GM12878 (cell line): ENCODE measurements at regions of chr15 and their contacts with region 1.

Region 1: DNA sequence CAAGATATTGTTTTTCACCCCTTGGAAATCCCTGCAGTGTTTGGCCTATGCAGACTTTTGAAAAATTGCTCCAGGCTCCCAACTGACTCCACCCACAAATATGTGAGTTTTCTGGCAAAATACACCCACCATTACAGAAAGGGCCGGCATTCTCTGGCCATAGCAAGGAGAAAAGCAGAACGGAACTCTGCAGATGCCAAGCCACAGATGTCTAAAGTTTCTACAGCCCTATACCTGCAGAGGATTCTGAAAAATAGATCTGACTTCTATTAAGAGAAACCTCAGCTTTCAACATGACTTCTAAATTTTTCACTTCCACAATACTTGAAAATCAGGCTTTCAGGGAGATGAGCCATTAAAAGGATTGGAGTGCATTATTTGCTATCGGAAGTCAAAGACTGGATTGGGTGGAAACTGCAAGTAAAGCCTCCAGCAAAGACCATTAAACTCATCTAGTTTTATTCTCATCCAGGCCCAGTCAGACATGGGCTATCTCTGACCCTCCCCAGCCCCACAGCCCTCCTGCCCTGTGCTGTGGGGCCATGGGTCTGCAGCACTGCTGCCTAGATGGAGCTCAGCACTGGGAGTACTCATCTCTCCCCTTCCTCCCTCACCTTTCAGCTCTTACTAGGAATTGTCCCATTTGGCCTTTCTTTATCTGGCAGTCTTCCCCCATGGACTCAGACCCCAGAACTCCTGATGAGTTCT is 243.1 kb upstream of the GOLGA6L4 start:
- DNase-seq: peak; percentile 60
- ATAC-seq: peak; percentile 89
- H3K4me3 ChIP-seq: no peak overlapping the region; the same call in 1 of the 2 replicates
- H3K27ac ChIP-seq: peak overlapping the region; percentile 77
- H3K4me1 ChIP-seq: peaks cover 31% of the 10 kb centered on the region
- H3K27me3 ChIP-seq: no peaks in the 10 kb centered on the region
- CTCF ChIP-seq: no peak
- EP300 ChIP-seq: no peak
- POLR2A ChIP-seq: no peak
- RAD21 ChIP-seq: 0 out of 2 replicates have a peak, but pooled peaks have one; percentile 16

Region 2: GRCh38 chr15:83564975-83565532 is 427.4 kb before region 1 on chr15:
- CTCF ChIA-PET with region 1: interaction called, 8 read pairs
- POLR2A ChIA-PET with region 1: no interaction called
- RAD21 ChIA-PET with region 1: interaction called, 10 read pairs
- SMC1A ChIA-PET with region 1: interaction called, 10 read pairs
- in situ Hi-C with region 1: no loop called
- intact Hi-C with region 1: no loop called
- DNase-seq: no peak
- ATAC-seq: no peak
- H3K4me3 ChIP-seq: no peak overlapping the region
- H3K27ac ChIP-seq: no peak overlapping the region
- H3K4me1 ChIP-seq: no peaks in the 10 kb centered on the region; the same call in 1 of the 2 replicates
- H3K27me3 ChIP-seq: no peaks in the 10 kb centered on the region
- CTCF ChIP-seq: no peak
- EP300 ChIP-seq: no peak
- POLR2A ChIP-seq: no peak
- RAD21 ChIP-seq: no peak

Region 3: GRCh38 chr15:83734487-83734886 is 258.0 kb before region 1 on chr15:
- CTCF ChIA-PET with region 1: interaction called, 23 read pairs
- POLR2A ChIA-PET with region 1: interaction called, 3 read pairs
- RAD21 ChIA-PET with region 1: interaction called, 10 read pairs
- SMC1A ChIA-PET with region 1: interaction called, 3 read pairs
- in situ Hi-C with region 1: no loop called
- intact Hi-C with region 1: loop called (anchors 10 kb)
- DNase-seq: no peak
- ATAC-seq: peak; percentile 56; the same call in 2 of the 3 replicates
- H3K4me3 ChIP-seq: no peak overlapping the region
- H3K27ac ChIP-seq: no peak overlapping the region
- H3K4me1 ChIP-seq: no peaks in the 10 kb centered on the region
- H3K27me3 ChIP-seq: no peaks in the 10 kb centered on the region
- CTCF ChIP-seq: peak; percentile 34 to 53 (median 49); a peak in 5 of 6 replicates
- EP300 ChIP-seq: no peak
- POLR2A ChIP-seq: no peak
- RAD21 ChIP-seq: peak; percentile 94

Region 4: DNA sequence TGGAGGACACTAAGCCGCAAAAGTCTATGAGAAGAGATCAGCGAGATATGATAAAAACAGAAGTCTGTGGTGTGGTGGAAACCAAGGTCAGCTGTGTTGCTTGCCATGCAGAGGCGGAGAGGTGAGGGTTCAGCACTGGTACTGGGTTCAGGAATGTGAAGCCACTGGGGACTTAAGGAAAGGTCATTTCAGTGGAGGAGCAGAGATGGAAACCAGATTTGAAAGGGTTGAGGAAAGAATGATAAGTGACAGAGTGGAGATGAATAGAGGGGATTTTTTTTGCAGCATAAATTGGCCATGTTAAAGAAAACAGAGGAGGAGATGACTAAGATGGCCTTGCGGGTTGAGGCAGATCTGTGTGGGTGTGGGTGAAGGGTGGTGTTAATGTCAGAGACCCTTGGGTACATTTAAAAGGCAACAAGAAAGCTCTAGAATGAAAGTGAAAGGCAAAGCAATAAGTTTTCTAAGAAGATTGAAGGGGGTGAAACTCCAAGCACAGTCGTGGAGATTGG is 73.1 kb before region 1 on chr15:
- CTCF ChIA-PET with region 1: no interaction called
- POLR2A ChIA-PET with region 1: interaction called, 3 read pairs
- RAD21 ChIA-PET with region 1: interaction called, 7 read pairs
- SMC1A ChIA-PET with region 1: interaction called, 10 read pairs
- in situ Hi-C with region 1: no loop called
- intact Hi-C with region 1: no loop called
- DNase-seq: peak; percentile 71
- ATAC-seq: peak; percentile 96
- H3K4me3 ChIP-seq: peak overlapping the region; percentile 3; the same call in 1 of the 2 replicates
- H3K27ac ChIP-seq: peak overlapping the region; percentile 68
- H3K4me1 ChIP-seq: peaks cover 20% of the 10 kb centered on the region
- H3K27me3 ChIP-seq: no peaks in the 10 kb centered on the region
- CTCF ChIP-seq: no peak
- EP300 ChIP-seq: no peak
- POLR2A ChIP-seq: no peak
- RAD21 ChIP-seq: no peak

Region 5: DNA sequence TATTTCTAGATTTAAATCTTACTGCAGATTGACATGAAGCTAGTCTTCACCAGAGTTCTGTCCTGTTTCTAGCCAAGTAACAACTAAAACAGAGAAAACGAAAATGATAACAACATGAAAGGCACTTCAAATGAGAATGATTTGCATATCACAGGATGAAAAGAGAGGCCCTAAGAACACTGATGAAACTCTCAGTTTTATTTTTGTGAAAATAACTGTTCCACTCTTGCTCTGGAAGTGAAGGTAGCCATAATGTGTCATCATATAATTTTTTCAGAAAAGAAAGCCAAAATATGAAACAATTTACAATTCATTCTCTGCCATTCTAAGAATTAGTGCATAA is 64.1 kb before region 1 on chr15:
- CTCF ChIA-PET with region 1: interaction called, 5 read pairs
- POLR2A ChIA-PET with region 1: no interaction called
- RAD21 ChIA-PET with region 1: interaction called, 5 read pairs
- SMC1A ChIA-PET with region 1: interaction called, 5 read pairs
- in situ Hi-C with region 1: no loop called
- intact Hi-C with region 1: loop called (anchors 5 kb)
- DNase-seq: peak; percentile 84
- ATAC-seq: peak; percentile 90
- H3K4me3 ChIP-seq: peak overlapping the region; percentile 31; the same call in 1 of the 2 replicates
- H3K27ac ChIP-seq: peak overlapping the region; percentile 99
- H3K4me1 ChIP-seq: peaks cover 36% of the 10 kb centered on the region
- H3K27me3 ChIP-seq: no peaks in the 10 kb centered on the region
- CTCF ChIP-seq: no peak
- EP300 ChIP-seq: peak; percentile 14 to 63; a peak in 2 of 4 replicates
- POLR2A ChIP-seq: no peak
- RAD21 ChIP-seq: no peak

Region 6: GRCh38 chr15:83973816-83974215 is 18.7 kb before region 1 on chr15:
- CTCF ChIA-PET with region 1: interaction called, 29 read pairs
- POLR2A ChIA-PET with region 1: no interaction called
- RAD21 ChIA-PET with region 1: interaction called, 8 read pairs
- SMC1A ChIA-PET with region 1: interaction called, 9 read pairs
- in situ Hi-C with region 1: no loop called
- intact Hi-C with region 1: no loop called
- DNase-seq: no peak
- ATAC-seq: peak; percentile 93
- H3K4me3 ChIP-seq: no peak overlapping the region
- H3K27ac ChIP-seq: no peak overlapping the region
- H3K4me1 ChIP-seq: no peaks in the 10 kb centered on the region
- H3K27me3 ChIP-seq: no peaks in the 10 kb centered on the region
- CTCF ChIP-seq: peak; percentile 58 to 64 (median 61)
- EP300 ChIP-seq: no peak
- POLR2A ChIP-seq: no peak
- RAD21 ChIP-seq: peak; percentile 60